ENCODE measurements at regions of chr18 and their contacts with region 1.

Region 1: GRCh38 chr18:76398896-76399612 is 96.0 kb downstream of the ZNF516 start:
- DNase-seq: peak; percentile 34 to 90
- H3K4me3 ChIP-seq: no peak overlapping the region
- H3K27ac ChIP-seq: no peak overlapping the region
- H3K4me1 ChIP-seq: peaks cover 0 to 3% (median 1%) of the 10 kb centered on the region in 4 experiments; a peak in 4 of 7 replicates
- H3K27me3 ChIP-seq: no peaks in the 10 kb centered on the region
- CTCF ChIP-seq: peak; percentile 90 to 99 (median 96)
- EP300 ChIP-seq: no peak
- POLR2A ChIP-seq: no peak
- RAD21 ChIP-seq: peak; percentile 96 to 99

Region 2: GRCh38 chr18:76410660-76411417 is 11.8 kb after region 1 on chr18:
- CTCF ChIA-PET with region 1: interaction called, 33 read pairs
- POLR2A ChIA-PET with region 1: no interaction called
- DNase-seq: no peak
- H3K4me3 ChIP-seq: no peak overlapping the region
- H3K27ac ChIP-seq: no peak overlapping the region
- H3K4me1 ChIP-seq: peaks cover 0 to 6% (median 1%) of the 10 kb centered on the region in 4 experiments; a peak in 2 of 7 replicates
- H3K27me3 ChIP-seq: no peaks in the 10 kb centered on the region
- CTCF ChIP-seq: no peak
- EP300 ChIP-seq: no peak
- POLR2A ChIP-seq: no peak
- RAD21 ChIP-seq: no peak

Region 3: DNA sequence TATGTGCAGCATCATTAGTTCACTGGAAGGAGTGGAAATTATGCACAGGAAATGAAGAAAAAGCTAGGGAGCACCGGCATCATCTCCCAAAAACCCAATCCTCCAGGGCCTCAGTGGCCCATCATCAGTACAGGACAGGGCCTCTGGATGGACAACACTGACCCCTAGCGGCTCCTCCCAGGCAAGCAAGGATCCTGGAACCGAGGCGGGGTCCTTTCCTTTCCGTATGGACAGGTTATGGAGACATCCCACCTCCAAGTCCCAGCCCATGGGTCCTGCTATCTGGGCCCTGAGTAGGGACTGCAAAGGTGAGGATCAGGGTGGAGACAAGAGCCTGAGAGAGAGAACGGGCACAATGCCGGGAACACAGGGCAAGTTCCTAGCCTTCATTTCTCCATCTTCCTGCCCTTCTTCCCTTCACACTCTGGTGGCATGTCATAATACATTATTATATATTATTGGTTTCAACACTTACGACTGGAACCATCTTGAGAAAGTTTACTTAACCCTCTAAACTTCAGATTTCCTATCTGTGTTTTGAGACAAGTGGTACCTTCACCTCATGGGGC is 27.8 kb after region 1 on chr18:
- CTCF ChIA-PET with region 1: interaction called, 33 read pairs
- POLR2A ChIA-PET with region 1: no interaction called
- DNase-seq: peak in 1 of 2 experiments; percentile 93
- H3K4me3 ChIP-seq: no peak overlapping the region
- H3K27ac ChIP-seq: no peak overlapping the region
- H3K4me1 ChIP-seq: peaks cover 0 to 14% (median 8%) of the 10 kb centered on the region in 4 experiments; a peak in 4 of 7 replicates
- H3K27me3 ChIP-seq: no peaks in the 10 kb centered on the region; a peak in 1 of 7 replicates
- CTCF ChIP-seq: peak; percentile 82 to 95 (median 91)
- EP300 ChIP-seq: no peak
- POLR2A ChIP-seq: no peak
- RAD21 ChIP-seq: peak; percentile 85 to 87

Region 4: DNA sequence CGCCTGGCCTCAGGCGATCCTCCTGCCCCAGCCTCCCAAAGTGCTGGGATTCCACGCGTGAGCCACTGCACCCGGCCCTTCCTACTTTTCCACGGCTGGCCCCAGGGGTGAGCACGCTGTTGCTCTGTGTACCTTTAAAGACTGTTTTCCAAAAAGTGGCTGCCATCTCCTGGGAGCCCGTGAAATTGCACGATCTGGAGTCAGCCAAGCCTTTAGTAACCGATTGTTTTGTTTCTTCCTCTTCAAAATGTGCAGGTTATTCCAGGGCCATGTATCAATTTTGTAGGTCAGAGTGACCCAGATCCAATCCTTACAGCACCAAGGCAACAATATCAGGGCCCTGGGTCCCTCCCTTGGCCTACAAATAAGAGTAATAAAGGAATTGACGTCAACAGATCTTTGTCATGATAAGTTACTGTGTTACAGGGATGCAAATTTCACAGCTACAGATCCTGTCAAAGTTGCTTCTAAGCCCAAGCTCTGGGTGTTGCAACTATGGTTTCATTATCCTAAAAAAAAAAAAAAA is 287.7 kb after region 1 on chr18:
- CTCF ChIA-PET with region 1: interaction called, 20 read pairs
- POLR2A ChIA-PET with region 1: no interaction called
- DNase-seq: peak in 1 of 2 experiments; percentile 67
- H3K4me3 ChIP-seq: no peak overlapping the region; a peak in 1 of 8 replicates
- H3K27ac ChIP-seq: 0 out of 2 replicates have a peak overlapping the region, but pooled peaks have one; percentile 13
- H3K4me1 ChIP-seq: peaks cover 0 to 11% (median 0%) of the 10 kb centered on the region in 4 experiments; a peak in 5 of 7 replicates
- H3K27me3 ChIP-seq: no peaks in the 10 kb centered on the region
- CTCF ChIP-seq: peak in 2 of 3 experiments; percentile 51 to 55; a peak in 3 of 4 replicates
- EP300 ChIP-seq: no peak
- POLR2A ChIP-seq: no peak
- RAD21 ChIP-seq: peak; percentile 59 to 68